Transverse colon (tissue), 4 donors: ENCODE measurements at regions of chr22 and their contacts with region 1.

Region 1: GRCh38 chr22:43273902-43274484 is 69.2 kb downstream of the SCUBE1 start:
- DNase-seq: no peak
- H3K4me3 ChIP-seq: no peak overlapping the region
- H3K27ac ChIP-seq: no peak overlapping the region
- H3K4me1 ChIP-seq: peaks cover 4 to 14% (median 9%) of the 10 kb centered on the region in 4 donors
- H3K27me3 ChIP-seq: no peaks in the 10 kb centered on the region
- CTCF ChIP-seq: peak; percentile 62 to 83 (median 68)
- EP300 ChIP-seq: no peak
- POLR2A ChIP-seq: no peak

Region 2: GRCh38 chr22:41544671-41545476 is 1729.1 kb before region 1 on chr22:
- in situ Hi-C with region 1: no loop called
- intact Hi-C with region 1: loop called (anchors 5 kb)
- DNase-seq: no peak
- H3K4me3 ChIP-seq: peak overlapping the region in 3 of 4 donors; percentile 58 to 90 (median 75)
- H3K27ac ChIP-seq: peak overlapping the region; percentile 89 to 96 (median 92)
- H3K4me1 ChIP-seq: peaks cover 10 to 35% (median 28%) of the 10 kb centered on the region in 4 donors
- H3K27me3 ChIP-seq: no peaks in the 10 kb centered on the region
- CTCF ChIP-seq: no peak
- EP300 ChIP-seq: no peak
- POLR2A ChIP-seq: no peak

Region 3: GRCh38 chr22:43187171-43188099 is 86.6 kb before region 1 on chr22:
- in situ Hi-C with region 1: no loop called
- intact Hi-C with region 1: no loop called
- DNase-seq: peak; percentile 97
- H3K4me3 ChIP-seq: peak overlapping the region; percentile 35 to 60 (median 42)
- H3K27ac ChIP-seq: peak overlapping the region; percentile 90 to 96 (median 93)
- H3K4me1 ChIP-seq: peaks cover 0 to 23% (median 18%) of the 10 kb centered on the region in 4 donors
- H3K27me3 ChIP-seq: peaks cover 4% of the 10 kb centered on the region
- CTCF ChIP-seq: peak; percentile 41 to 82 (median 66)
- EP300 ChIP-seq: peak; percentile 34
- POLR2A ChIP-seq: peak; percentile 62

Region 4: DNA sequence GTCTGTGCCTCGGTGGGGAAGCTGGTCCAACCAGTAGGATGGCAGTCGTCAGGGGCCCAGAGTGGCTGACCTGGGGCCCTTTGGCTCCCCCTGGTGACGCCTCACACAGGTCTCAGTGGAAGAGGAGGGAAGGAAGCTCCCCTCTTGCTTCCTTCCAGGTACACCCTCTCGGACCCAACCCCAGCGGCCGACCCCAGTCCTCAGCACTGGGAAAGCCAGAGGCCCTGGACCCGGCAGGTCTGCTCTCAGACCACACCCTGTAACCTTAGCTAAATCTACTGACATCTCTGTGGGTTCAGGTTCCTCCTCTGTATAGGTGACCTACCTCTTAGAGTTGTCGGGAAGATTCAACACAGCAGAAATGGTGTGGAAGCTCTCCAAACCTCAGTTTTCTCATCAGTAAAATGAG is 72.5 kb after region 1 on chr22:
- in situ Hi-C with region 1: loop called in 3 of 4 experiments (anchors 10 kb)
- intact Hi-C with region 1: loop called (anchors 1 kb)
- DNase-seq: peak; percentile 61
- H3K4me3 ChIP-seq: no peak overlapping the region
- H3K27ac ChIP-seq: no peak overlapping the region
- H3K4me1 ChIP-seq: peaks cover 0 to 11% (median 5%) of the 10 kb centered on the region in 4 donors
- H3K27me3 ChIP-seq: peaks cover 57% of the 10 kb centered on the region
- CTCF ChIP-seq: peak; percentile 57 to 70 (median 64)
- EP300 ChIP-seq: no peak
- POLR2A ChIP-seq: no peak

Region 5: GRCh38 chr22:43356881-43357280 is 82.9 kb after region 1 on chr22:
- in situ Hi-C with region 1: loop called in 1 of 4 experiments (anchors 10 kb)
- intact Hi-C with region 1: no loop called
- DNase-seq: no peak
- H3K4me3 ChIP-seq: no peak overlapping the region
- H3K27ac ChIP-seq: no peak overlapping the region
- H3K4me1 ChIP-seq: no peaks in the 10 kb centered on the region
- H3K27me3 ChIP-seq: peaks cover 4% of the 10 kb centered on the region
- CTCF ChIP-seq: no peak
- EP300 ChIP-seq: no peak
- POLR2A ChIP-seq: no peak

Region 6: GRCh38 chr22:43385770-43386641 is 112.0 kb after region 1 on chr22:
- in situ Hi-C with region 1: loop called in 1 of 4 experiments (anchors 10 kb)
- intact Hi-C with region 1: loop called (anchors 10 kb)
- DNase-seq: peak; percentile 72
- H3K4me3 ChIP-seq: no peak overlapping the region
- H3K27ac ChIP-seq: no peak overlapping the region
- H3K4me1 ChIP-seq: peaks cover 0 to 3% (median 0%) of the 10 kb centered on the region in 4 donors
- H3K27me3 ChIP-seq: peaks cover 28% of the 10 kb centered on the region
- CTCF ChIP-seq: peak; percentile 74 to 91 (median 81)
- EP300 ChIP-seq: no peak
- POLR2A ChIP-seq: no peak